ENCODE measurements at regions of chr10 and their contacts with region 1.

Region 1: DNA sequence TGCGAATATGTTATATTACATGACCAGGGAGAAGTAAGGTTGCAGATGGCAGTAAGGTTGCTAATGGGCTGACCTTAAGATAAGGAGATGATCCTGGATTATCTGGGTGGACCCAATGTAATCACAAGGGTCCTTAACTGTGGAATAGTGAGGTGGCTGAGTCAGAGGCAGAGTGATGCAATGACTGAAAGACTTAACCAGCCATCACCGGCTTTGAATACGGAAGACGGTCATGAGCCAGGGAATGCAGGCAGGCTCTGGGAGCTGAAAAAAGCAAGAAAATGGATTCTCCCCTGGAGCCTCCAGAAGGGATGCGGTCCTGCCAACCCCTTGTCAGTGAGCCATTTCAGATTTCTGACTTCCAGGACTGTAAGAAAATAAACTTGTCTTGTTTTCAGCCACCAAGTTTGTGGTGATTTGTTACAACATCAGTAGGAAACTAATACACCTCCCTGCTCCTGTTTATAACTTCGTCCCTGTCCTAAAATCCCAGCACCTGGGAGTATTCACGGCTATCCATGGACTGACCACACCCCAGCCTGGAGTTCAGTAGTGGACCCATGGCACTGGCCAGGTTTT is 4.6 kb upstream of the C10orf95 start:
- DNase-seq: peak in 2 of 4 experiments; percentile 31 to 78
- ATAC-seq: peak; percentile 80
- H3K4me3 ChIP-seq: no peak overlapping the region
- H3K27ac ChIP-seq: peak overlapping the region; percentile 92
- H3K4me1 ChIP-seq: peaks cover 27 to 41% of the 10 kb centered on the region in 2 experiments
- H3K27me3 ChIP-seq: no peaks in the 10 kb centered on the region
- CTCF ChIP-seq: no peak
- EP300 ChIP-seq: peak; percentile 97
- POLR2A ChIP-seq: no peak
- RAD21 ChIP-seq: no peak

Region 2: GRCh38 chr10:102432162-102432950 is 23.6 kb before region 1 on chr10 and contains the start of gene CUEDC2:
- CTCF ChIA-PET with region 1: no interaction called
- POLR2A ChIA-PET with region 1: interaction called, 14 read pairs
- in situ Hi-C with region 1: no loop called
- intact Hi-C with region 1: no loop called
- DNase-seq: peak; percentile 78 to 97 (median 84)
- ATAC-seq: peak; percentile 85
- H3K4me3 ChIP-seq: peak within 1 kb of the TSS; percentile 55
- H3K27ac ChIP-seq: peak within 1 kb of the TSS; percentile 88
- H3K4me1 ChIP-seq: peaks cover 23 to 31% of the 10 kb centered on the region in 2 experiments
- H3K27me3 ChIP-seq: no peaks in the 10 kb centered on the region
- CTCF ChIP-seq: no peak; a peak in 1 of 6 replicates
- EP300 ChIP-seq: peak; percentile 40; the same call in 1 of the 2 replicates
- POLR2A ChIP-seq: peak; percentile 79
- RAD21 ChIP-seq: no peak
- polyA plus RNA-seq, gene CUEDC2: 8.5 to 17.0 TPM

Measured in K562 (cell line).